ENCODE measurements at regions of chr18 and their contacts with region 1.

Region 1: DNA sequence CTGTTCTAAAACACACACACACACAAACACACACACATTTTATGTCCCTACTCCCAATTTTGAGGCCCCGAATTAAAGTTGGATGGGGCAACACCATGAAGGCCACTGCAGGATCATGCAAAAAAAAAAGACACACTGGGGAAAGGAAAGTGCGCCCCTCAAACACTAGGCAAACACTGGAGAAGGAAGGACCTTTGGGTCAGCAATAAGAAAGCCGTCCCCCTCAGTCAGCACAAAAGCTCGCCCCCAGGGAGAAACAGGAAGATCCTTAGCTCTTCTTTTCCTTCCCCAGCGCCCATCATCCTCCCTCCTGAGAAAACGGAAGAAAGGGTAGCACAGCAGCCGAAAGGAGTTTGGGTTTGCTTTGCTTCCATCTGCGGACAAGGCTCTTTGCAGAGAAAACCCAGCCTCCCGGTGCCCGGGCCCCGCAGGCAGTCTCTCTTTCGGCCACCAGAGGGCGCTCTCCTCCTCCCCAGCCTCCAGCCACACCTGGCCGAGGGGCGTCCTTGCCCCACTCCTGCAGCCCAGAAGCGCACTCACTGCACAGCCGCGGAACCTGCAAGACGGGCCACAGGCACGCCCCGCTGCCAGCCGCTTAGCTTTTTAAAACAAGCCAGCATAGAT is 248.5 kb downstream of the CDH20 start:
- DNase-seq: peak; percentile 77 to 82
- ATAC-seq: peak; percentile 90 to 96 (median 92)
- H3K4me3 ChIP-seq: peak overlapping the region; percentile 26 to 66 (median 49)
- H3K27ac ChIP-seq: peak overlapping the region; percentile 24 to 77 (median 66)
- H3K4me1 ChIP-seq: peaks cover 0 to 53% (median 25%) of the 10 kb centered on the region in 9 donors
- H3K27me3 ChIP-seq: peaks cover 0 to 6% (median 0%) of the 10 kb centered on the region in 7 donors
- CTCF ChIP-seq: peak; percentile 97 to 99 (median 98)

Region 2: GRCh38 chr18:61261870-61262269 is 319.8 kb before region 1 on chr18:
- intact Hi-C with region 1: no loop called
- DNase-seq: no peak
- ATAC-seq: no peak
- H3K4me3 ChIP-seq: no peak overlapping the region
- H3K27ac ChIP-seq: no peak overlapping the region
- H3K4me1 ChIP-seq: no peaks in the 10 kb centered on the region
- H3K27me3 ChIP-seq: no peaks in the 10 kb centered on the region
- CTCF ChIP-seq: no peak

Region 3: DNA sequence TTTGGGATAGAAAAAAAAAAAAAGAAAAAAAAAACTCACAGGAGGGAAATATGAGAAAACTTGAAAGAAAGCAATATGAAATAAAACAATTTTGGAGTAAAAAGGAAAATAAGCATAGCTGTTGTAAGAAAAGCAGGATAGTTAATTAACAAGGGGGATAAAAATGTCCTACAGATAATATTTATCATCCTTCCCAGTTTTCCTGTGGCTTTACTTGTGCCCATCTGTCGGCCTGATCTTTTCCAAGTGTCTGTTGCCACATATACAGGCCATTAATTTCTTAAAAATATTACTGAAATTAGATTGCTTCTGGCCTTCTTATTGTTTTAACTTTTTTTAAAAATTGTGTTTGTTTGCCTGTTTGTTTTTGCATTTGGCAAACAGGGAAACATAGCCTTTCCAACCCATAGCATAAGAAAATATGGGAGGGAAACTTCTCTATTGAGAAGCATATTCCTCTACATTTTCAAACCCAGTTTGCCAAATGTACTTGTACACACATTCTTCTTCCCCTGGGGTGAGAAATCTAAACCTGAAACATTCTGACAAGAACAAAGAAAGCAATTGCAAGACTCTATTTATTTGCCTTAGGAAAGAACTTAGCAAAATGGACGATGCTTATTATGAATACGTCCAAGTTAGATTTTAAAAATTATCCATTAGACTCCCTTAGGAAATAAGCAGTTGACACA is 23.8 kb after region 1 on chr18:
- intact Hi-C with region 1: loop called in 1 of 10 experiments (anchors 2 kb)
- DNase-seq: no peak
- ATAC-seq: no peak
- H3K4me3 ChIP-seq: peak overlapping the region in 9 of 10 donors; percentile 29 to 55 (median 51)
- H3K27ac ChIP-seq: peak overlapping the region; percentile 76 to 93 (median 85)
- H3K4me1 ChIP-seq: peaks cover 0 to 41% (median 24%) of the 10 kb centered on the region in 9 donors
- H3K27me3 ChIP-seq: no peaks in the 10 kb centered on the region
- CTCF ChIP-seq: no peak

Region 4: GRCh38 chr18:61635901-61636528 is 54.3 kb after region 1 on chr18:
- intact Hi-C with region 1: loop called in 3 of 10 experiments (anchors 2 to 5 kb)
- DNase-seq: peak; percentile 32 to 57
- ATAC-seq: peak; percentile 77 to 89 (median 85)
- H3K4me3 ChIP-seq: peak overlapping the region in 4 of 10 donors; percentile 9 to 21 (median 12)
- H3K27ac ChIP-seq: peak overlapping the region in 9 of 10 donors; percentile 1 to 73 (median 66)
- H3K4me1 ChIP-seq: peaks cover 0 to 24% (median 10%) of the 10 kb centered on the region in 9 donors
- H3K27me3 ChIP-seq: no peaks in the 10 kb centered on the region
- CTCF ChIP-seq: peak; percentile 87 to 95 (median 91)

Region 5: GRCh38 chr18:61738488-61738887 is 156.8 kb after region 1 on chr18:
- intact Hi-C with region 1: loop called in 2 of 10 experiments (anchors 5 to 10 kb)
- DNase-seq: no peak
- ATAC-seq: peak in 3 of 8 donors; percentile 25 to 66 (median 31)
- H3K4me3 ChIP-seq: no peak overlapping the region
- H3K27ac ChIP-seq: peak overlapping the region; percentile 23 to 88 (median 70)
- H3K4me1 ChIP-seq: peaks cover 6 to 54% (median 32%) of the 10 kb centered on the region in 9 donors
- H3K27me3 ChIP-seq: no peaks in the 10 kb centered on the region
- CTCF ChIP-seq: no peak

Region 6: DNA sequence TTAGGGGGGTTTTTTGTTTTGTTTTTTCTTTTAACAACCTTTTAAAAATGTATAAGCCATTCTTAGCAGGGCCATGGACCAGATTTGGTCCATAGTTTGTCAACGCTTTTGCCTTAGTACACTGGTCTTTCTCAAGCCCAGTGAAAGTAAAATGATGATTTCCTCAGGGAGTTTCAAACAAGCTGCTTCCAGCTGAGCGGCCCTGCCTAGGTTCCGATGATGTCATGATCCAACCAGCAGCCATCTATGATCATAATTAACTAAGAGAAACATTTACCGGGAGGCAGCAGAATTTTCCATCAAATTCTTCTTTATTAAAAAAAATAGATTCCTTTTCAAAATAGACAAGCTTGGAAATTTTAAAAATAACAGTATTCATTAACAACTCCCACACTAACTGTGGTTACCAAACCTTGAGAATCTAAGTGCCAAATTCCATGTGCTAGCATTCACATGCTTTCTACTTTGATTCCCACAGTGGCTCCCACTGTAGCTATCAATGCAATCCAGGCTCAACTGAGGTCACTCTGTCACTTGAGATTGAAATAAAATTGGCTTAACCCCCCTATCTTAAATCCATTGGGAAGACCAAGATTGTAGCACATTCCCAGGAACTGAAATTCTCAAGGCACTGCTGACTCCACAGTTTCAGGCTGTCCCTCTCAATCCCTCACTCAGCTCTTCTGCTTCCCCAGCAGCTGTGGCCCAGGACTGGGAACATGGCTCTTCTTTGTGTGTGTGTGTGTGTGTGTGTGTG is 162.3 kb after region 1 on chr18:
- intact Hi-C with region 1: loop called in 2 of 10 experiments (anchors 5 to 10 kb)
- DNase-seq: peak; percentile 32 to 76
- ATAC-seq: peak; percentile 63 to 82 (median 70)
- H3K4me3 ChIP-seq: no peak overlapping the region
- H3K27ac ChIP-seq: peak overlapping the region; percentile 60 to 92 (median 81)
- H3K4me1 ChIP-seq: peaks cover 6 to 74% (median 39%) of the 10 kb centered on the region in 9 donors
- H3K27me3 ChIP-seq: no peaks in the 10 kb centered on the region
- CTCF ChIP-seq: no peak

Region 7: GRCh38 chr18:61893971-61894750 is 312.5 kb after region 1 on chr18:
- intact Hi-C with region 1: loop called in 3 of 10 experiments (anchors 2 to 5 kb)
- DNase-seq: peak; percentile 87
- ATAC-seq: peak; percentile 90 to 96 (median 94)
- H3K4me3 ChIP-seq: peak overlapping the region; percentile 32 to 97 (median 90)
- H3K27ac ChIP-seq: peak overlapping the region; percentile 79 to 96 (median 90)
- H3K4me1 ChIP-seq: peaks cover 0 to 50% (median 31%) of the 10 kb centered on the region in 9 donors
- H3K27me3 ChIP-seq: peaks cover 0 to 61% (median 0%) of the 10 kb centered on the region in 7 donors
- CTCF ChIP-seq: peak; percentile 16 to 71 (median 37)

Region 8: DNA sequence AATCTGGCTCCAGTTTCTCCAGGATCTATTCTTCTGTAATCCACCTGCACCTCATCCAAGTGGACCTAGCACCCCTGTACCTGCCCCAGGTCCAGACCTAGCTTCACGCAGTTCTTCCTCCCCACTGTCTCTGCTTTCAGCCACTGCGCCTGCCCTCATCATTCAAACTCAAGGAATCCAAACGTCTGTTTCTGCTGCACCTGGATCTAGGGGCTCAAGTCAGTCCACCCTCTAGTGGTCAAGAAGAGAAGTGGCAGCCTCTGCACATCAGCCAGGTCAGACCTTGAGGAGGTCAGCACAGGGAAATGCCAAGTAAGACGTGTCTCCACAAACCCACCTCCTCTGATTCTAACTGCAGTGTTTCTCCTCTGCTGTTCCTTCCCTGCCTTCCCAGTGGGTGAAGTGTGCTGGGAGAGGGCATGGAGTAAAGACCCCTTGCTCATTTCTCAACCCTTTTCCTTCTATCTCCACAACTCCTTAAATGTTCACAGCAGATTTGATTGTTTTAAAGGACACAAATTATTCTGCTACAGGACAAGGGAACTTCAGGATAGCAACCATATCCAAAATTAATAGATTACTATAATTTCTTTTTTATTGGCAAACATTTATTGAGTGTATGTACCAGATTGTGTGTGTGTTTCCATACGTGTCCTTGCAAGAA is 319.8 kb after region 1 on chr18:
- intact Hi-C with region 1: loop called in 3 of 10 experiments (anchors 2 to 10 kb)
- DNase-seq: no peak
- ATAC-seq: peak; percentile 50 to 79 (median 71)
- H3K4me3 ChIP-seq: no peak overlapping the region
- H3K27ac ChIP-seq: no peak overlapping the region
- H3K4me1 ChIP-seq: peaks cover 0 to 6% (median under 1%) of the 10 kb centered on the region in 9 donors
- H3K27me3 ChIP-seq: peaks cover 0 to 15% (median 0%) of the 10 kb centered on the region in 7 donors
- CTCF ChIP-seq: peak; percentile 79 to 96 (median 92)

Measured in heart right ventricle (tissue), 16 donors.